ENCODE measurements at regions of chr1 and their contacts with region 1.

Region 1: DNA sequence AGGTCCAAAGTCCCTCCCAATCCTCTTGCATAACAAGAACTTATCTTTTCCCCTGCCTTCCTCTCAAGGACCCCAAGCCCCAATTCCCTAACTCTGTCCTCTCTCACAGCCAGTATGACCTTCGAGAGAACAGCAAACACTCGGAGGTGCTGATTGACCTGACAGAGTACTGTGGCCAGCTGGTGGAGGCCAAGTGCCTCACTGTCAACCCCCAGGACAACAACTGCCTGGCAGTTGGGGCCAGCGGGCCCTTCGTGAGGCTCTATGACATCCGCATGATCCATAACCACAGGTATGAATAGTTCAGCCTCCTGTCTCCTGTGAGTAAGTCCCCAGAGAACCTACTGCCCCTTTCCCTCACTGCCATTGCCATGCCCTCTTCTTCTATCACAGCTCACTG is 29.9 kb upstream of the TMEM222 start:
- DNase-seq: peak; percentile 45
- H3K4me3 ChIP-seq: no peak overlapping the region
- H3K27ac ChIP-seq: no peak overlapping the region
- H3K4me1 ChIP-seq: peaks cover 6% of the 10 kb centered on the region
- H3K27me3 ChIP-seq: no peaks in the 10 kb centered on the region
- CTCF ChIP-seq: no peak

Region 2: DNA sequence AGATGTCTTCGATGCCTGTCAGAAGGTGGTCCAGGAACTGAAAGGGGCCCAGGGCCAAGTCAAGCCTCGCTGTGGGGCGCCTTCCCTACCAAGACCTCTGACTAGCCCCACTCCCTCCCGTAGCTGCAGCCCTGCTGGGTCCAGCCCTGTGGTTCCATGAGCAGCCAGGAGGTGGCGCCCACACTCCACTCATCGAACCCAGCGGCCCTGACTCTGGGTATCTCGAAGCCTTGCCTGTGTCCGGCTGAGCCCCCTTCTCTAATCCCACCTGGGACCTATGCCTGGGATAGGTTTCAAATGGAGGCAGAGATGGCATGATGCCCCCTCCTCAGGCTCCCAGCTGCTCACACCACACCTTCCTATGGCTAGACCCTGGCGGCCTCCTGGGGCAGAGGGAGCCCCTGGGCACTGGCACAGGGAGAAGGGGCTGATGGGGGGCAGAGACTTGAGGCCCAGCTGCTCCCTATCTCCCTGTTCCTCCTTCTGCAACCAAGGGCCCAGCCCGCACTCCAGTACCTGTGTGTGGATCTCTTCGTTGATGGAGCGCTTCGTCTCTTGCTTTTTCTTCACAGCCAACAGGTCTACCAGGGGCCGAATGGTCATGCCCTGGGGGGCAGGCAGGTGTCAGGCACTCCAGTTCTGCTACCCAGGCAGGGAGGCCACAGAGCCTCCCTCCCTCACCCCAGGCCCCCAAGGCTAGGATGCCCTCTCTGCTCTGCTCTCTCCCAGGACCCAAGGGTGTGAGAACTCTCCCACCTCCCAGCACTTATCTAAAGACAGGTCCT is 189.2 kb before region 1 on chr1:
- CTCF ChIA-PET with region 1: interaction called, 11 read pairs
- dilution Hi-C with region 1: no loop called
- in situ Hi-C with region 1: loop called in 1 of 2 experiments (anchors 5 kb)
- intact Hi-C with region 1: no loop called
- DNase-seq: peak; percentile 45
- H3K4me3 ChIP-seq: no peak overlapping the region
- H3K27ac ChIP-seq: no peak overlapping the region
- H3K4me1 ChIP-seq: peaks cover 40% of the 10 kb centered on the region
- H3K27me3 ChIP-seq: no peaks in the 10 kb centered on the region
- CTCF ChIP-seq: peak; percentile 82 to 94

Region 3: DNA sequence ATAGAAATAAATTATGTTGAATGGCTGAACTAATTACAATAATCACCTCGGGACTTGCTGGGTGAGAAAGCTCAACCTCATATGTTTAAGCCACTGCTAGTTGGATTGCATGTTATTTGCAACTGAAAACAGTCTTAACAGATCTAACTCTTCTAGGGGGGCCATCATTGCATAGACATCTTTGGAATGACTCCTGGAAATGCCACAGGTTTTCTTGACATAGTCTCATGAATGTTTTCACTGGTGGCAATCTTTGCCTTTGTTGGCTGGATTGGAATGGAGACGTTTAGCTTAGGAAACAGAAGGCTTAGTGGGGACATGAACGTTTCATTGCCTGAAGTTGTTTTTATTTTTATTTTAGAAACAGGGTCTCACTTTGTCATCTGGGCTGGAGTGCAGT is 66.5 kb before region 1 on chr1:
- CTCF ChIA-PET with region 1: no interaction called
- dilution Hi-C with region 1: loop called (anchors 5 kb)
- in situ Hi-C with region 1: no loop called
- intact Hi-C with region 1: no loop called
- DNase-seq: no peak
- H3K4me3 ChIP-seq: no peak overlapping the region
- H3K27ac ChIP-seq: no peak overlapping the region
- H3K4me1 ChIP-seq: no peaks in the 10 kb centered on the region
- H3K27me3 ChIP-seq: no peaks in the 10 kb centered on the region
- CTCF ChIP-seq: no peak

Region 4: GRCh38 chr1:27321813-27322577 is 29.9 kb after region 1 on chr1 and contains the start of gene TMEM222:
- CTCF ChIA-PET with region 1: interaction called, 22 read pairs
- dilution Hi-C with region 1: no loop called
- in situ Hi-C with region 1: no loop called
- intact Hi-C with region 1: no loop called
- DNase-seq: peak; percentile 97
- H3K4me3 ChIP-seq: peak within 1 kb of the TSS; percentile 88 to 98 (median 88)
- H3K27ac ChIP-seq: peak within 1 kb of the TSS; percentile 86
- H3K4me1 ChIP-seq: peaks cover 14% of the 10 kb centered on the region
- H3K27me3 ChIP-seq: no peaks in the 10 kb centered on the region
- CTCF ChIP-seq: no peak
- total RNA-seq, gene TMEM222: 23.0 to 39.9 TPM

Measured in mammary epithelial cell (primary cell).